ENCODE measurements at regions of chr15 and their contacts with region 1.

Region 1: GRCh38 chr15:34038023-34038870 is 757 bp downstream of the AVEN start:
- DNase-seq: peak; percentile 60 to 96 (median 75)

Region 2: DNA sequence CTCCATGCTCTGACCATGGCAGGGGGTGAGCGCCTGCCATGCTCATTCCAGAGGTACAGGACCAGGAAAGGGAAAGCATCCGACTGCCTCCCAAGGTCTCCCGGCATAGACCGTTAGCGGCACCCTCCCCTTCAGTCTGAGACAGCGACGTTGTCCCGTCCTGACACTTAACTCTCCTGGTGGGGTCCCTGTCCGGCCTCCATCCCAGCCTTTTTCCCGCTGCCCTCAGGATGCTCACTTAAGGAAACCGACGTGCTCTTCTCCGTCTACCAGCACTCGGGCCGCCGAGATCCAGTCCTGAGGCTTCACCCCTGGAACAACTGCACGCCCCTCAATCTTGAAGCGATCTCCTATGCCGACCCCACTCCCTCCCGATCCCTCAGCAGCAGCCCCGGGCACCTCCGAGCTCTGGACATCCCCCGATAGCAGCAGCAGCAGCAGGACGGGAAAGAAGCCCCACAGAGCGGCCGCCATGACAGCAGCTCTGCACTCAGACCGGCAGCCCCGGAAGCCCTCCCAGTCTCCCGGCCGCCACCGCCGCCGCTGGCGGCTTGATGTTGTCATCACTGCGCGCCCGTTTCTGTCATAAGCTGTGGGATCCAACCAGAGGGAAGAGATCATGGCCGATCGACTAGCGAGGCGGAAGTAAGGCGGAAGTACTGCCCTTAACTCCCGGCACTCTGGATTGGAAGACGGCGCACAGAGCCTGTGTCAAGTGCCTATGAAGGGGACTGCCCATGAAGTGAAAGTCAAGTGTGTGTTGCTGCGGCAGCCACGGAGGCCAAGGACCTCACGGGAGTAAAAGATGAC is 63.3 kb after region 1 on chr15 and contains the starts of genes EMC7 and PGBD4:
- intact Hi-C with region 1: loop called (anchors 2 kb)
- DNase-seq: peak; percentile 97 to 100 (median 99)

Region 3: DNA sequence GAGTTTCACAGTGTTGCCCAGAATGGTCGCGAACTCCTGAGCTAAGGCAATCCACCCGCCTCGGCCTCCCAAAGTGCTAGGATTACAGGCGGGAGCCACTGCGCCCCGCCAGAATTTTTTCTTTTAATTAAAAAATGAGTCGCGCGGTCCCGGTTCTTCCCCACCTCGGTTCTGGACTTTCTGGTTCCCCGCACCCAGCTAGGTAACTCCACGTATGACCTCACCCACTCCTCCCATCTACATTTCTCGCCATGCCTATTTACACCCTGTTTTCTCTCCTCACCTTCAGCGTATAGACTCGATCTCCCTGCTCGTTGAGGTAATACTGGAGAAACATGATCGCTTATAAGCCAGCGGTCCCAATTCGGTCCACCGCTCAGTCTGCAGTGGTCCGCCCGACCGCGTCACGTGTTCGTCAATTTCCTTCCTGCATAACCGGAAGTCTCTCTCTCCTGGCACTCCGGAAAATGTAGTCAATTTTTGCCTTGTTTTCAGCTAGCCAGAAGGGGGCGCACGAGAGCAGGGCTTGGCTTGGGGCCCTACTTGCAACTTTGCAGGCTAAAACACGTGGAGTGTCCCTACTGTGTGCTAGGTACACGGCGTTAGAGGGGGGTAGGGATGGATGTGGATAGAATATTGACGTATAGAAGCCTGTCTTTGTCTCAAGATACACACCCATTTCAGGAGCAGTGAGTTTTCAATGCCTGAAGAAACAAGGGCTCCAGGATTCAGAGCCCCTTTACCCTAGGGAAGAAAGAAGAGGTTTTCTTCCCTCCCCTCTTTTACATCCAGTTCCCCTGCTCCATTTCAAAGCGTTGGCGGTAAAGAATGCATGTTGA is 304.7 kb after region 1 on chr15 and contains the starts of genes NOP10 and NUTM1:
- intact Hi-C with region 1: loop called (anchors 5 kb)
- DNase-seq: peak; percentile 85 to 98 (median 93)

Region 4: GRCh38 chr15:34456658-34457057 is 418.4 kb after region 1 on chr15:
- intact Hi-C with region 1: no loop called
- DNase-seq: no peak

Measured in posterior cingulate gyrus (tissue), 11 donors.